ENCODE measurements at regions of chr11 and their contacts with region 1.

Region 1: GRCh38 chr11:85694386-85694980 is 8.5 kb upstream of the CCDC89 start:
- DNase-seq: peak; percentile 16
- H3K4me3 ChIP-seq: no peak overlapping the region
- H3K27ac ChIP-seq: no peak overlapping the region
- H3K4me1 ChIP-seq: no peaks in the 10 kb centered on the region
- H3K27me3 ChIP-seq: no peaks in the 10 kb centered on the region
- CTCF ChIP-seq: peak; percentile 49 to 58

Region 2: GRCh38 chr11:85307366-85307765 is 387.1 kb before region 1 on chr11:
- CTCF ChIA-PET with region 1: no interaction called
- dilution Hi-C with region 1: no loop called
- in situ Hi-C with region 1: no loop called
- intact Hi-C with region 1: no loop called
- DNase-seq: no peak
- H3K4me3 ChIP-seq: no peak overlapping the region
- H3K27ac ChIP-seq: no peak overlapping the region
- H3K4me1 ChIP-seq: no peaks in the 10 kb centered on the region
- H3K27me3 ChIP-seq: no peaks in the 10 kb centered on the region
- CTCF ChIP-seq: no peak

Region 3: GRCh38 chr11:85595285-85595884 is 99.1 kb before region 1 on chr11:
- CTCF ChIA-PET with region 1: no interaction called
- dilution Hi-C with region 1: no loop called
- in situ Hi-C with region 1: no loop called
- intact Hi-C with region 1: no loop called
- DNase-seq: peak; percentile 8
- H3K4me3 ChIP-seq: no peak overlapping the region
- H3K27ac ChIP-seq: no peak overlapping the region
- H3K4me1 ChIP-seq: no peaks in the 10 kb centered on the region
- H3K27me3 ChIP-seq: no peaks in the 10 kb centered on the region
- CTCF ChIP-seq: peak; percentile 34 to 59

Region 4: GRCh38 chr11:85826116-85826855 is 131.8 kb after region 1 on chr11:
- CTCF ChIA-PET with region 1: no interaction called
- dilution Hi-C with region 1: no loop called
- in situ Hi-C with region 1: loop called in 1 of 2 experiments (anchors 10 kb)
- intact Hi-C with region 1: loop called (anchors 1 kb)
- DNase-seq: peak; percentile 41
- H3K4me3 ChIP-seq: no peak overlapping the region
- H3K27ac ChIP-seq: no peak overlapping the region
- H3K4me1 ChIP-seq: peaks cover 31% of the 10 kb centered on the region
- H3K27me3 ChIP-seq: no peaks in the 10 kb centered on the region
- CTCF ChIP-seq: peak; percentile 69 to 73

Region 5: GRCh38 chr11:85854557-85855340 is 160.3 kb after region 1 on chr11:
- CTCF ChIA-PET with region 1: interaction called, 3 read pairs
- dilution Hi-C with region 1: no loop called
- in situ Hi-C with region 1: no loop called
- intact Hi-C with region 1: loop called (anchors 1 kb)
- DNase-seq: peak; percentile 89
- H3K4me3 ChIP-seq: peak overlapping the region; percentile 24 to 61 (median 49)
- H3K27ac ChIP-seq: peak overlapping the region; percentile 8
- H3K4me1 ChIP-seq: peaks cover 10% of the 10 kb centered on the region
- H3K27me3 ChIP-seq: no peaks in the 10 kb centered on the region
- CTCF ChIP-seq: peak; percentile 24 to 80

Region 6: DNA sequence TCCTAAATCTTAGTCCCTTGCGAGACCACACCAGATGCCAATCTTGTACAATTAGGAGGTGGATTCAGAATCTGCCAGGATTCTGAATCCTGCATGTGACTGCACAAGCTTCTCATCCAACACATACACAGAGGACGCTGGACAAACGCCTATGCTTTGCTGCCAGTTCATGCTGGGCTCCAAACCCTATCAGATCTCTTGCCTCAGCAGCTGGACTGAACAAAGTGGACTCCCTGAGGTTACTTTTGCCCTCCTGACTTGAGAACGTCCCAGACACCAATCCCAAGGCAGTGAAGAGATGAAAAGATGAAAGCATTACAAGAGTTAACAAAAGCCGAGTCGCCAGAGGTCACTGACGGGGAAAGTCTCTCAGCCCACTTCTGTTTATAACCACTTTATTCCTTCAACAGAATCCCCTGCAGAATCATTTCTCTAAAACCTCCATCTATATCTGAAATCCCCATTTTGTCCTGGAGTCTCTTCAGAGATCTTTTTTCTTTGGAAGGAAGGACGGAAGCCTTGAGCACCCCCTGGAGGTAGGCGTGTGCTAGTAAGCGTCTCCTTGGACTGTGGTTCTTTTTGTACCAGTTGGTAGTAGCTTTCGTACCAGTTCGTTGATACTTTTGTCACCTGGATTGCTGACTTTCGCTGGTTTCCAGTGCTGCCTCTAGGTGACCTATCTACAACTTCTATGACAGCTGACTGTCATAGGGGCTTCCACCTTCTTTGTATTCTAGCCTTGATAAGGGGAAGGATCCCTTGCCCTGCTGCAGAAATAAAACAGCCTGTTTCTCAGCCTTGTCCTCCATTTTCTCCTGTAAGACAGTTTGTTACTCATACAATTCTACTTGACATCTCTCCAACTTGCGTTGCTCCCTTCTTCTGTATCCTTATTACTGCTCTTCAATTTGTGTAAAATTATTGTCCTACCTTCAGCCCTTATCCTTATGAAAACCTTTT is 523.9 kb after region 1 on chr11:
- CTCF ChIA-PET with region 1: no interaction called
- dilution Hi-C with region 1: no loop called
- in situ Hi-C with region 1: no loop called
- intact Hi-C with region 1: loop called (anchors 10 kb)
- DNase-seq: peak; percentile 55
- H3K4me3 ChIP-seq: peak overlapping the region in 1 of 3 experiments; percentile 4
- H3K27ac ChIP-seq: no peak overlapping the region
- H3K4me1 ChIP-seq: no peaks in the 10 kb centered on the region
- H3K27me3 ChIP-seq: no peaks in the 10 kb centered on the region
- CTCF ChIP-seq: peak; percentile 92 to 95

Measured in mammary epithelial cell (primary cell).